Activated CD8-positive, alpha-beta memory T cell treated with anti-CD3 and anti-CD28 coated beads, Interleukin-2, amount 10 ng/mL, durations not matched to agents 7 days and 5 days (primary cell): ENCODE measurements at regions of chr17 and their contacts with region 1.

Region 1: GRCh38 chr17:41801374-41802271 is 10.1 kb downstream of the P3H4 start:
- DNase-seq: peak; percentile 77
- ATAC-seq: peak; percentile 90
- H3K4me3 Mint-ChIP-seq: no peak overlapping the region
- H3K27ac Mint-ChIP-seq: no peak overlapping the region
- H3K4me1 Mint-ChIP-seq: peaks cover 6% of the 10 kb centered on the region
- H3K27me3 Mint-ChIP-seq: no peaks in the 10 kb centered on the region

Region 2: GRCh38 chr17:41510251-41511065 is 291.2 kb before region 1 on chr17:
- CTCF ChIA-PET with region 1: no interaction called
- DNase-seq: no peak
- ATAC-seq: no peak
- H3K4me3 Mint-ChIP-seq: no peak overlapping the region
- H3K27ac Mint-ChIP-seq: no peak overlapping the region
- H3K4me1 Mint-ChIP-seq: no peaks in the 10 kb centered on the region
- H3K27me3 Mint-ChIP-seq: no peaks in the 10 kb centered on the region

Region 3: DNA sequence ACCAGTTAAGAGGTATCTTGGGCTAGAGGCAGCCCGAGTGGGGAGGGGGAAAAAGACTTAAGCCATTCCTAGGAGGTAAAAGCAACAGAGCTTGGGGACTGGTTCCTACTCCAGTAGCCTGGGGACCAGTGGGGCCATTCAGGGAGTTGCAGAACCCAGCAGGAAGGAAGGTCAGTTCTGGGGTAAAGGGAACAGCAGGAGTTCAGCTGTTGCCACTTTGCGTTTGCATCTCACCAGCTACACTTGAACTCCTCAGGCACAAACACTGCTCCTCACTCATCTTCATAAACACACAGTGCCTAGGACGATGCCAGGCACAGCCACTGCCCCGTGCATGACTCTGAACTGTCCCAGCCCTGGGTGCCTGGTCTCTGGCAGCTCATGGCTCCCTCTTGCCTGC is 71.1 kb before region 1 on chr17:
- CTCF ChIA-PET with region 1: interaction called, 41 read pairs
- DNase-seq: no peak
- ATAC-seq: no peak
- H3K4me3 Mint-ChIP-seq: no peak overlapping the region
- H3K27ac Mint-ChIP-seq: no peak overlapping the region
- H3K4me1 Mint-ChIP-seq: peaks cover 5% of the 10 kb centered on the region
- H3K27me3 Mint-ChIP-seq: peaks cover 47% of the 10 kb centered on the region

Region 4: DNA sequence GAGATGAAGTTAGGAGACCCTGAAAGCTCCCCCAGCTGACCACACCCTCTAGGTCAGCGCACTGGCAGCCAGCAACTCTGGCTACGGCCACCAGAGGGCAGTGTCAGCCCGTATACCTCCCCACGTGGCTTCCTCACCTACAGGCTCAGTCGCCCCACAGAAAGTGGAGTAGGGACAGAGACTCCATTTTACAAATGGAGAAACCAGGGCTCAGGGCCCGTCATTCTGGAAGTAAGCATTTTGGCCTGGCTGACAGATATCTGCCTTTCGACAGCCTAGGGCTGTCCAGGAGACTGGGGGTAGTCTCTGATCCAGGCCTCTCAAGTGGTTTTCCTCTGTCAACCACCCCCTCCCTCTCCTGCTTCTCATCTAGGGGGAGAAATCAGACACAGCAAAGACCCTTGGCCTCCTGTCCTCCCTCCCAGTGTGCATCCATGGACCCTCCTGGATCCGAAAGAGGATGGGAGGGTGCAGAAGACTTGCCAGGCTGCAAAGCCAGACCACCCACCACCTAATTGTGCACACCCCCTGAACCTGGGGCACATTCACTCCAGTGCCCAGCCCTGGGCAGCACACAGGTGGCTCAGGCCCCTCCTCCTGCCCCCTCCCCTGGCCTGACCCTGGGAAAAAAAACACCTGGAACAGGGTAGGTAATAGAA is 63.4 kb before region 1 on chr17:
- CTCF ChIA-PET with region 1: interaction called, 41 read pairs
- DNase-seq: peak; percentile 87
- ATAC-seq: peak; percentile 93
- H3K4me3 Mint-ChIP-seq: no peak overlapping the region
- H3K27ac Mint-ChIP-seq: peak overlapping the region; percentile 24
- H3K4me1 Mint-ChIP-seq: peaks cover 11% of the 10 kb centered on the region
- H3K27me3 Mint-ChIP-seq: peaks cover 42% of the 10 kb centered on the region

Region 5: DNA sequence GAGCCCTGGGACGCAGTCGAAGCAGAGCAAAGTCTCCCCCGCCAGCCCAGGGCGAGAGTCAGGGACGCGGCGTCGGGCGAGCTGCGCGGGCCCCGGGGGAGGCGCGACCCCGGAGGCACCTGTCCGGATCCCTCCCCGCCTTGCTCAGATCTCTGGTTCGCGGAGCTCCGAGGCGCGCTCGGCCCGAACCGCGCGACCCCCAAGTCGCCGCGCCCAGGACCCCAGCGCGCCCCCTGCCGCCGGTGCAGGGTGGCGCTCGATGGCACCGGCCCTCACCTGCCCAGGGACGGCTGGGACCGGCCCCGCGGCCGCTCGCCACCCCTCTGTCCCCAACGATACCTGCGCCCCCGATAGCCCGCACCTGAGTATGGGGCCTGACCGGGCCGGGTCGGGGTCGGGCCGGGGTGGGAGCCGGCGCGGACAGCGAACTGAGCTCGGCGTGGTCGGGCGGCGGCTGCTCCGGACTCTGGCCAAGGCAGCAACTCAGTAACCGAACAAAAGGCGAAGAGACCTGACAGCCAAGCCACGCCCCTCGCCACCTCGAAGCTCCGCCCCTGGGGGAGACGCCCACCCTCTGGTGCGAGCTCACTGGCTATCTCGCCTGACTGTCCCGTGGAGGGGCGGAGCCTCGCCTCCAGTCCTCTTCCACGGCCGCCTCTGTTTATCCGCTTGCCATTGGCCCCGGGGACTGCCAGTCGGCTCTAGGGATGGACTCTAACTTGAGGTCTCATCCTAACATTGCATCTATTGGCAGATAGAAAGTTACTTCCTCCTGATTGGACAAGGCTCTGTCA is 15.2 kb before region 1 on chr17 and contains the start of gene JUP:
- CTCF ChIA-PET with region 1: interaction called, 17 read pairs
- DNase-seq: peak; percentile 93
- ATAC-seq: peak; percentile 97
- H3K4me3 Mint-ChIP-seq: peak within 1 kb of the TSS; percentile 16
- H3K27ac Mint-ChIP-seq: no peak within 1 kb of the TSS
- H3K4me1 Mint-ChIP-seq: peaks cover 26% of the 10 kb centered on the region
- H3K27me3 Mint-ChIP-seq: peaks cover 62% of the 10 kb centered on the region
- total RNA-seq, gene JUP: 2.3 TPM

Region 6: DNA sequence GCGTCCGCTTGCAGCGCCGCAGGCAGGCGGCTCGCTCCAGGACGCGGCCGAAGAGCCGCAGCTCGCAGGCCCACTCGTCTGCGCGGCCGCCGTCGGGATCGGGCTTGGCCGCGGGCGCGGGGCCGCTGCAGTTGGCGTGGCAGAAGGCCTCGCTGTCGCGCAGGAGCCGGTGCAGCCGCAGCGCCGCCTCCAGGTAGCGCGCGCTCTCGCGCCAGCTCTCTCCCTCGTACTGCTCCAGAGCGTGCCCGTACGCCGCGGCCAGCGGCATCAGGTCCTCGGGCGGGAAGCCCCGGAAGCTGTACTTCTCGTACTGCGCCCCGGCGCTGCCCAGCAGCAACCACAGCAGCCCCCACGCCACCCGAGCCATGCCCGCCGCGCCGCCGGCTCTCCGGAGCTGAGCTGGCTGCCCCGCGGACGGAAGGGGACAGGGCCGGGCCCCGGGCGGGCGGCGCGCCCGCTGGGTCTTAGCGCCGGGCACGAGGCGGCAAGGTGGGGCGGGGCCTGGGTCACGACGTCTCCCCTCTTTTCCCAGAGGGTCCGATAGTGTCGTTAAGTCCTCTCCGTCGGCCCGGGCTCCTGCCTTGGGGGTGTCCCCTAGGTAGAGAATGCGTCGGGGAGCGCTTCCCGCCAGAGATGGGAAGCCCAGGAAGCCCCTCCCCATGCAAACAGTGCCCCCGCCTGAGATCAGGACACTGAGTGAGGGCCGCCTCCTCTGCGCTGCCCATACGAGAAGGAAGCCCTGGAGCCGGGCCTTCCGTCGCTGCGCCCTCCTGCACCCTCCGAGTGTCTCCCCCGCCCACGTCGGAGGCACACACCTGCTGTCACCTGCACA is 10.1 kb after region 1 on chr17 and contains the start of gene P3H4:
- CTCF ChIA-PET with region 1: interaction called, 27 read pairs
- DNase-seq: peak; percentile 79
- ATAC-seq: peak; percentile 94
- H3K4me3 Mint-ChIP-seq: peak within 1 kb of the TSS; percentile 86
- H3K27ac Mint-ChIP-seq: peak within 1 kb of the TSS; percentile 45
- H3K4me1 Mint-ChIP-seq: peaks cover 18% of the 10 kb centered on the region
- H3K27me3 Mint-ChIP-seq: peaks cover 18% of the 10 kb centered on the region
- total RNA-seq, gene P3H4: 2.1 to 3.0 TPM

Region 7: GRCh38 chr17:41962768-41963434 is 161.3 kb after region 1 on chr17:
- CTCF ChIA-PET with region 1: no interaction called
- DNase-seq: peak; percentile 83
- ATAC-seq: peak; percentile 23
- H3K4me3 Mint-ChIP-seq: no peak overlapping the region
- H3K27ac Mint-ChIP-seq: no peak overlapping the region
- H3K4me1 Mint-ChIP-seq: peaks cover 18% of the 10 kb centered on the region
- H3K27me3 Mint-ChIP-seq: no peaks in the 10 kb centered on the region